IMR-90 (cell line): ENCODE measurements at regions of chr17 and their contacts with region 1.

Region 1: DNA sequence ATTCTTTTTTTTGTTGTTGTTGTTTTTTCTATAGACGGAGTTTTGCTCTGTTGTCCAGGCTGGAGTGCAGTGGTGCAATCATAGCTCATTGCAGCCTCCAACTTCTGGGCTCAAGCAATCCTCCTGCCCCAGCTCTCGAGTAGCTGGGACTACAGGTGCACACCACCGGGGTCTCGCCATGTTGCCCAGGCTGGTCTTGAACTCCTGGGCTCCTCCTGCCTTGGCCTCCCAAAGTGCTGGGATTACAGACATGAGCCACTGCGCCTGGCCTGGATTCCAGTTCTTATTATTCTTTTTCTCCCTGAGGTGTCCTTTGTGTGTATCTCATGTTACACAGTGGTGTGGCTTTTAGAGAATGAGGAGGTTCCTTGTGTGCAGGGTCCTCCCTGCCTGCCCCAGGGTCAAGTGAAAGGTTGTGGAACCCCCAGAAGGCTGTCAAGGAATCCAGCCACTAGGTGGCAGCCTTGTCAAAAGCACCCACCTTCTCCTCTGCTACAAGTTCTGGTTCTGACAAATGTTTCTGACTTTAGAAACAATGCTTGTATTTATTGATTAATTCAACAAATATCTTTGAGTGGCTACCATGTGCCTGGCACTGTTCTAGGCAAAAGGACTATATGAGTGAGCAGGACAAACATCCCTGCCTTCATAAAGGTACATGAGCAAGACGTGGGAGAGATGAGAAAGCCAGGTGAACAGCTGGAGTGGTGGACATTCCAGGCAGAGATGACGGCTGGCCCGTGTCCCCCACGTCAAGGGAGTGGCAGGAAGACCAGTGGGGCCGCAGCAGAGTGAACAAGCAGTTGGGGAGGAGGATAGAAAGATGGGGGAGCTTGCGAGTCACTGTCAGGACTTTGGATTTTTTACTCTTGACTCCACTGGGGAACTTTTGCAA is 112.4 kb downstream of the SPECC1 start:
- DNase-seq: peak; percentile 62
- ATAC-seq: peak; percentile 79
- H3K4me3 ChIP-seq: no peak overlapping the region
- H3K27ac ChIP-seq: no peak overlapping the region
- H3K4me1 ChIP-seq: peaks cover 5% of the 10 kb centered on the region
- H3K27me3 ChIP-seq: no peaks in the 10 kb centered on the region
- CTCF ChIP-seq: peak; percentile 92
- POLR2A ChIP-seq: 0 out of 2 replicates have a peak, but pooled peaks have one; percentile 44
- RAD21 ChIP-seq: peak; percentile 94

Region 2: GRCh38 chr17:19678581-19679453 is 442.8 kb before region 1 on chr17:
- CTCF ChIA-PET with region 1: no interaction called
- POLR2A ChIA-PET with region 1: no interaction called
- dilution Hi-C with region 1: no loop called
- in situ Hi-C with region 1: no loop called
- intact Hi-C with region 1: no loop called
- DNase-seq: no peak
- ATAC-seq: no peak
- H3K4me3 ChIP-seq: no peak overlapping the region
- H3K27ac ChIP-seq: no peak overlapping the region
- H3K4me1 ChIP-seq: no peaks in the 10 kb centered on the region
- H3K27me3 ChIP-seq: peaks cover 6% of the 10 kb centered on the region
- CTCF ChIP-seq: no peak
- POLR2A ChIP-seq: no peak
- RAD21 ChIP-seq: no peak

Region 3: GRCh38 chr17:19958023-19958422 is 163.6 kb before region 1 on chr17:
- CTCF ChIA-PET with region 1: no interaction called
- POLR2A ChIA-PET with region 1: no interaction called
- dilution Hi-C with region 1: no loop called
- in situ Hi-C with region 1: no loop called
- intact Hi-C with region 1: no loop called
- DNase-seq: peak; percentile 96
- ATAC-seq: peak; percentile 94
- H3K4me3 ChIP-seq: no peak overlapping the region
- H3K27ac ChIP-seq: no peak overlapping the region
- H3K4me1 ChIP-seq: peaks cover 2% of the 10 kb centered on the region; the same call in 1 of the 2 replicates
- H3K27me3 ChIP-seq: no peaks in the 10 kb centered on the region
- CTCF ChIP-seq: no peak
- POLR2A ChIP-seq: no peak
- RAD21 ChIP-seq: no peak

Region 4: GRCh38 chr17:20009302-20010098 is 112.1 kb before region 1 on chr17 and contains the start of gene SPECC1:
- CTCF ChIA-PET with region 1: interaction called, 4 read pairs
- POLR2A ChIA-PET with region 1: no interaction called
- dilution Hi-C with region 1: no loop called
- in situ Hi-C with region 1: no loop called
- intact Hi-C with region 1: loop called (anchors 1 kb)
- DNase-seq: peak; percentile 43
- ATAC-seq: peak; percentile 99
- H3K4me3 ChIP-seq: peak within 1 kb of the TSS; percentile 51
- H3K27ac ChIP-seq: no peak within 1 kb of the TSS
- H3K4me1 ChIP-seq: no peaks in the 10 kb centered on the region
- H3K27me3 ChIP-seq: peaks cover 36% of the 10 kb centered on the region
- CTCF ChIP-seq: peak; percentile 96
- POLR2A ChIP-seq: no peak
- RAD21 ChIP-seq: peak; percentile 53
- total RNA-seq, gene SPECC1: 26.2 and 35.3 TPM in 2 replicates

Region 5: GRCh38 chr17:20315821-20316220 is 194.2 kb after region 1 on chr17:
- CTCF ChIA-PET with region 1: interaction called, 3 read pairs
- POLR2A ChIA-PET with region 1: no interaction called
- dilution Hi-C with region 1: no loop called
- in situ Hi-C with region 1: loop called (anchors 5 kb)
- intact Hi-C with region 1: loop called (anchors 2 kb)
- DNase-seq: peak; percentile 4
- ATAC-seq: no peak
- H3K4me3 ChIP-seq: no peak overlapping the region
- H3K27ac ChIP-seq: no peak overlapping the region
- H3K4me1 ChIP-seq: no peaks in the 10 kb centered on the region
- H3K27me3 ChIP-seq: no peaks in the 10 kb centered on the region
- CTCF ChIP-seq: no peak
- POLR2A ChIP-seq: no peak
- RAD21 ChIP-seq: no peak

Region 6: GRCh38 chr17:20852239-20852989 is 730.8 kb after region 1 on chr17:
- CTCF ChIA-PET with region 1: no interaction called
- POLR2A ChIA-PET with region 1: no interaction called
- dilution Hi-C with region 1: no loop called
- in situ Hi-C with region 1: no loop called
- intact Hi-C with region 1: loop called (anchors 5 kb)
- DNase-seq: no peak
- ATAC-seq: peak; percentile 57
- H3K4me3 ChIP-seq: peak overlapping the region; percentile 29; the same call in 1 of the 2 replicates
- H3K27ac ChIP-seq: no peak overlapping the region
- H3K4me1 ChIP-seq: no peaks in the 10 kb centered on the region; the same call in 1 of the 2 replicates
- H3K27me3 ChIP-seq: peaks cover 21% of the 10 kb centered on the region
- CTCF ChIP-seq: no peak
- POLR2A ChIP-seq: no peak
- RAD21 ChIP-seq: no peak